ENCODE measurements at regions of chr2 and their contacts with region 1.

Region 1: GRCh38 chr2:62456721-62457539 is 49.1 kb downstream of the TMEM17 start:
- DNase-seq: peak; percentile 61
- H3K4me3 ChIP-seq: peak overlapping the region; percentile 63
- H3K27ac ChIP-seq: no peak overlapping the region
- H3K4me1 ChIP-seq: no peaks in the 10 kb centered on the region
- H3K27me3 ChIP-seq: no peaks in the 10 kb centered on the region
- CTCF ChIP-seq: peak; percentile 82

Region 2: DNA sequence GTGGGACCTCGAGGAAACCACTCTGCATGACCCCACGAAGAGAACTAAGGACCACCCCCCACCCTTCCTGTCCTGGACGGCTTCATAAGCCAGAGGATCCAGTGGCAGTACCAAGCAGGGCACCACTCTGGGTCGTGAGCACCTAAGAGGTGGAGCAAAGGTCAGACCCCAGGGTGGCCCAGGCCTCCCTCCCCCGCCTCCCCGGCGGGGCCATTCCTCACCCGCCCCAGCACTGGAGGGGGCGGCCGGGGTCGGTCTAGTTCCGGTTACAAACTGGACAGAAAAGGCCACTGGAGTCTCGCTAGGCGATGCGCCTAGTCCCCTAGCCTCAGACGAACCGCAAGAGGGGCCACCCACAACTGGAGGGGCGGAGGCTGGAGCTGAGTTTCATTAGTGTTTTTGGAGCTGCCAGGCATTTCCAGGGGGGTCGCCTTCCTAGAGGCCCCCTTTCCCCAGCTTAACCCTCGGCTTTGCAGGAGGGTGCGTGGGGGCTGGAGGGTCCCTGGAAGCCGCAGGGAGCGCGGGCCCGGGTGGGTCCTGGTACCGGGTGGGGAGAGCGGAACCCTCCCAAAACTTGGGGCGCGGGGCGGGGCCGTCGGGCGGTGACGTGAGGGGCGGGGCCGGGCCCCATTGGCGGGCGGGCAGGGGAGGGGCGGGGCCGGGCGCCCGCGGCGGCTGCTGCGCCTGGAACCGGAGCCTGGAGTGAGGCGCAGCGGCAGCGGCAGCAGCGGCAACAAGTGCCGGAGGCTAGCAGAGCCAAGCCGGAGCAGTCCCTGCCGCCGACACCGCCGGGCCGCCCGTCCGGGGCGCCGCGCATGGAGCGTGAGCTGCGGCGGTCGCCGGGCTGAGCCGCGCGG is 261.3 kb before region 1 on chr2 and contains the start of gene B3GNT2:
- CTCF ChIA-PET with region 1: no interaction called
- POLR2A ChIA-PET with region 1: no interaction called
- intact Hi-C with region 1: no loop called
- DNase-seq: peak; percentile 83
- H3K4me3 ChIP-seq: peak within 1 kb of the TSS; percentile 98
- H3K27ac ChIP-seq: peak within 1 kb of the TSS; percentile 74
- H3K4me1 ChIP-seq: peaks cover 9% of the 10 kb centered on the region
- H3K27me3 ChIP-seq: no peaks in the 10 kb centered on the region
- CTCF ChIP-seq: no peak
- total RNA-seq, gene B3GNT2: 6.2 and 6.5 TPM in 2 replicates

Region 3: DNA sequence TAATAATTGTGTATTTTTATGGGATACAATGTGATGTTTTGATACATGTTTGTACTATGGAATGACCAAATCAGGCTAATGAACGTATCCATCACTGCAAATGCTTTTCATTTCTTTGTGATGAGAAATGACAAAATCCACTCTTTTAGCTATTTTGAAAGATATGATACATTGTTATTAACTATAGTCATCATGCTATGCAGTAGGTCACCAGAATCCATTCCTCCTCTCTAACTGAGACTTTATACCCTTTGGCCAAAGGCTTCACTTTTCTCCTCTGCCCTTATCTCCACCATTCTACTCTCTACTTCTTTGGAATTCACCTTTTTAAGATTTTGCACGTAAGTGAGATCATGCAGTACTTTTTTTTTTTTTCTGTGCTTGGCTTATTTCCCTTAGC is 93.5 kb after region 1 on chr2:
- CTCF ChIA-PET with region 1: no interaction called
- POLR2A ChIA-PET with region 1: no interaction called
- intact Hi-C with region 1: no loop called
- DNase-seq: no peak
- H3K4me3 ChIP-seq: no peak overlapping the region
- H3K27ac ChIP-seq: no peak overlapping the region
- H3K4me1 ChIP-seq: no peaks in the 10 kb centered on the region
- H3K27me3 ChIP-seq: peaks cover 3% of the 10 kb centered on the region
- CTCF ChIP-seq: no peak

Region 4: GRCh38 chr2:62774555-62775366 is 317.8 kb after region 1 on chr2:
- CTCF ChIA-PET with region 1: interaction called, 26 read pairs
- POLR2A ChIA-PET with region 1: no interaction called
- intact Hi-C with region 1: loop called (anchors 1 kb)
- DNase-seq: peak; percentile 44
- H3K4me3 ChIP-seq: no peak overlapping the region
- H3K27ac ChIP-seq: no peak overlapping the region
- H3K4me1 ChIP-seq: no peaks in the 10 kb centered on the region
- H3K27me3 ChIP-seq: no peaks in the 10 kb centered on the region
- CTCF ChIP-seq: peak; percentile 77

Region 5: DNA sequence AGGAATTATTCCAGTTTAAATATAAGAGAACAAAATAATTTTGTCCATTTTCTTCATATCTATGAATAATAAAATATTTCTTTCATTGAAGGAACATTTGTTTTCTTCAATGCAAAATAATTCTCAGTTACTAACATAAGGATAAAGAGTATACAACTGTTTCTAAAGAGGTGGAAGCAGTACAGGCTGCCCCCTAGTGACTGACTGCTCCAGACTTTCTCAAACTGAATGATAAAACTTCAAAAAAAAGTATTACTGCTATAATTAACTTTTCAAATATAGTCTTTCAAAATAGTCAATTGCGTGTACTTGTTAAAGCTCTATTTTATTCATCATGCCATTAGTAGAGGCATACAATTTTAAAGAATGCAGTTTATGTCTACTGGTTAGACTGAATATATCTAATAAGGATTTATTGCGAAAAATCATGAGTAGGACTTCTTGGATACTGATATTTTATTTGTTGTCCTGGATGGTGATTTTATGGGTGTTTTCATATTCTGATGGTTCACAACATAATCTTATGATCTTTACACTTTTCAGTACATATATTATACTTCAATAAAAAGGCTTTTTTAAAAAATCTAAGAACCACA is 1031.3 kb after region 1 on chr2:
- CTCF ChIA-PET with region 1: no interaction called
- POLR2A ChIA-PET with region 1: no interaction called
- intact Hi-C with region 1: loop called (anchors 5 kb)
- DNase-seq: peak; percentile 27
- H3K4me3 ChIP-seq: no peak overlapping the region
- H3K27ac ChIP-seq: no peak overlapping the region
- H3K4me1 ChIP-seq: no peaks in the 10 kb centered on the region
- H3K27me3 ChIP-seq: no peaks in the 10 kb centered on the region
- CTCF ChIP-seq: peak; percentile 83

Measured in A673 (cell line).